K562 (cell line): ENCODE measurements at regions of chr6 and their contacts with region 1.

Region 1: DNA sequence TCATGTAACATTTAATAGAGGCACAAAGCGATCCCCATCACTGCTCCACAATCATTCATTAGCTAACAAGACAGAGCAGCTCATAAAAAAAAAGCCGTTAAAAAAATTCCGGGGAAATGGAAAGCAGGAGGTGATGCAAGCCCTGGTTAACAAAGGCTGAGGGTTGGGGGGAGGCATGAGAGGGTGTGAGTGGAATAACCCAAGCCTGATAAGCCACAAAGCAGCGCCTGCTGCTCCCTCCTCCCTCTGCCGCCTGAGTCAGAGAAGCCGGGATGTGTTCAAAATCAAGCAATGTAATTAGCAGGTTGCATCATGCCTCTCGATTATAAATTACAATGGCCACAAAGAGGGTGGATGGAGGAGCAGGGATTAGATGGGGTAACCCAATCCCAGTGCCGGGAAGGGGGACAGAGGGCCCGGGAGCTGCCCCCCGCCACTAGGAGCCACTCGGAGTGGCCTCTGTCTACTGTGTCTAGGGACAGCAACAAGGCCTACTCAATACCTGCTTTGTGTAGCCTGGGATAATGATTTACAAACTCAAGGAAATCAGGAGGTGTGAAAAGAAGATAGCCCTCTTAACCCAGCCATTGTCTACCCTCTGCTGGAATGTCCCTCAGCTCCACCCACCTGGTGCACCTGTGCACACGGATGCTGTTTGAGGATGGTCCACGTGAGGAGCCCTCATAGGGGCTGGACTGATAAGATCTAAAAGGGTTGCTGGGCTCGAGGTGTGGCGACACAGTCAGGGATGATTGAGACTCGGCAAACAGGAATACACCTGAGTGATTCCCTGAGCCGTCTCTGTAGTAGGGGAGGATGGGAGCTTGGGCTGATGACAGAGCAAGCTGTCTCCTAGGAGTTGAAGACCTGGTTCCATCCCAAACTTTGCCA is 156.9 kb downstream of the VEGFA start:
- DNase-seq: peak; percentile 84 to 95 (median 88)
- ATAC-seq: peak; percentile 92
- H3K4me3 ChIP-seq: no peak overlapping the region
- H3K27ac ChIP-seq: peak overlapping the region; percentile 93
- H3K4me1 ChIP-seq: peaks cover 31 to 33% of the 10 kb centered on the region in 2 experiments
- H3K27me3 ChIP-seq: no peaks in the 10 kb centered on the region
- CTCF ChIP-seq: 0 out of 6 replicates have a peak, but pooled peaks of 1 of the 3 experiments have one; percentile 12
- EP300 ChIP-seq: peak; percentile 100
- POLR2A ChIP-seq: no peak
- RAD21 ChIP-seq: peak; percentile 63

Region 2: GRCh38 chr6:43856005-43856765 is 70.7 kb before region 1 on chr6:
- CTCF ChIA-PET with region 1: no interaction called
- POLR2A ChIA-PET with region 1: no interaction called
- in situ Hi-C with region 1: no loop called
- intact Hi-C with region 1: loop called (anchors 5 kb)
- DNase-seq: peak; percentile 66 to 80 (median 72)
- ATAC-seq: peak; percentile 92
- H3K4me3 ChIP-seq: no peak overlapping the region
- H3K27ac ChIP-seq: no peak overlapping the region; the same call in 2 of the 3 replicates
- H3K4me1 ChIP-seq: peaks cover 6 to 8% of the 10 kb centered on the region in 2 experiments; a peak in 3 of 5 replicates
- H3K27me3 ChIP-seq: no peaks in the 10 kb centered on the region
- CTCF ChIP-seq: peak; percentile 83 to 89 (median 84)
- EP300 ChIP-seq: 0 out of 2 replicates have a peak, but pooled peaks have one; percentile 19
- POLR2A ChIP-seq: no peak
- RAD21 ChIP-seq: peak; percentile 89 to 92

Region 3: GRCh38 chr6:43887340-43887858 is 39.5 kb before region 1 on chr6:
- CTCF ChIA-PET with region 1: no interaction called
- POLR2A ChIA-PET with region 1: no interaction called
- in situ Hi-C with region 1: no loop called
- intact Hi-C with region 1: loop called (anchors 1 kb)
- DNase-seq: no peak
- ATAC-seq: peak; percentile 39
- H3K4me3 ChIP-seq: no peak overlapping the region
- H3K27ac ChIP-seq: no peak overlapping the region
- H3K4me1 ChIP-seq: peaks cover 20 to 28% of the 10 kb centered on the region in 2 experiments
- H3K27me3 ChIP-seq: no peaks in the 10 kb centered on the region
- CTCF ChIP-seq: no peak
- EP300 ChIP-seq: no peak
- POLR2A ChIP-seq: no peak
- RAD21 ChIP-seq: no peak

Region 4: DNA sequence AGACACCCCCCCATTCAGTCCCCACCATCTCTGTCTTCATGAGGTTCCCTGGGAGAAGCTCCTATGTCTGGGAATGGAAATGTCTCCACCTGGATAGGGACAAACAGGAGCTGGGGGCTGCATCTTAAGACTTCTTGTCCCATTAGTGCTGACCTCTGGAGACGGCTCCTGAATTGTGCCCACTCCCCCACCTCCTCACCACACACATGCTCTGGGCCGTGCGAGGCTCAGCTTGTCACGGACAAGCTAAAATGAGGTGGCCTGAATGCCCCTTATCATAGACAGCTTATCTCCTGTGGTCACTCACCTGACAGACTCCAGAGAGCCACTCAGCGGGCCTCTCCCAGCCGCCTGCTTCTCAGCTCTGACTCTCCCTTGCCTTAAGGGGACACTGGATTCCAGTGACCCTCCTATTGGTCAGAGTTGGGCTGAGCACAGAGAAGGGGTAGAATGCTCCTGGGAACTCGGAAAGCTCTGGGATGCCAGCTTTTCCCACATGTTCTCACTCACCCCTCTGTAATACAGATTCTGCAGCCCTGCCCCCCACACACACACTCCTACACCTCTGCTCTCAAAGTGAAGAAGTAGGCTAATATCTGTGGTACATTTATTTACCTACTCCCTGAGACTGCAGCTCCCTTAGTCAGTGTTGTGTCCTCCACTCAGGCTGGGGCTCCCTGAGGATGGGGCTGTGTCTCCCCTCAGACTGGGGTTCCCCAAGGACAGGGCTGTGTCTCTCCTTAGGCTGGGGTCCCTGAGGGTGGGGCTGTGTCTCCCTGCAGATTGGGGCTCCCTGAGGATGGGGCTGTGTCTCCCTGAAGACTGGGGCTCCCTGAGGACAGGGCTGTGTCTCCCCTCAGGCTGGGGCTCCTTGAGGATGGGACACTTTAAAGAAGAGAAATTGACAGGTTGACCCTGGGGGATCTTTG is 10.6 kb after region 1 on chr6:
- CTCF ChIA-PET with region 1: no interaction called
- POLR2A ChIA-PET with region 1: interaction called, 47 read pairs
- in situ Hi-C with region 1: no loop called
- intact Hi-C with region 1: no loop called
- DNase-seq: peak; percentile 73 to 84 (median 81)
- ATAC-seq: peak; percentile 79
- H3K4me3 ChIP-seq: no peak overlapping the region
- H3K27ac ChIP-seq: peak overlapping the region; percentile 32
- H3K4me1 ChIP-seq: peaks cover 46 to 52% of the 10 kb centered on the region in 2 experiments
- H3K27me3 ChIP-seq: no peaks in the 10 kb centered on the region
- CTCF ChIP-seq: no peak
- EP300 ChIP-seq: peak; percentile 80
- POLR2A ChIP-seq: no peak
- RAD21 ChIP-seq: peak; percentile 10 to 25; a peak in 2 of 4 replicates

Region 5: GRCh38 chr6:43945768-43946080 is 18.8 kb after region 1 on chr6:
- CTCF ChIA-PET with region 1: no interaction called
- POLR2A ChIA-PET with region 1: interaction called, 4 read pairs
- in situ Hi-C with region 1: no loop called
- intact Hi-C with region 1: loop called (anchors 1 kb)
- DNase-seq: no peak
- ATAC-seq: no peak
- H3K4me3 ChIP-seq: no peak overlapping the region
- H3K27ac ChIP-seq: peak overlapping the region; percentile 72
- H3K4me1 ChIP-seq: peaks cover 13 to 47% of the 10 kb centered on the region in 2 experiments; a peak in 4 of 5 replicates
- H3K27me3 ChIP-seq: no peaks in the 10 kb centered on the region
- CTCF ChIP-seq: no peak
- EP300 ChIP-seq: no peak
- POLR2A ChIP-seq: no peak
- RAD21 ChIP-seq: no peak

Region 6: DNA sequence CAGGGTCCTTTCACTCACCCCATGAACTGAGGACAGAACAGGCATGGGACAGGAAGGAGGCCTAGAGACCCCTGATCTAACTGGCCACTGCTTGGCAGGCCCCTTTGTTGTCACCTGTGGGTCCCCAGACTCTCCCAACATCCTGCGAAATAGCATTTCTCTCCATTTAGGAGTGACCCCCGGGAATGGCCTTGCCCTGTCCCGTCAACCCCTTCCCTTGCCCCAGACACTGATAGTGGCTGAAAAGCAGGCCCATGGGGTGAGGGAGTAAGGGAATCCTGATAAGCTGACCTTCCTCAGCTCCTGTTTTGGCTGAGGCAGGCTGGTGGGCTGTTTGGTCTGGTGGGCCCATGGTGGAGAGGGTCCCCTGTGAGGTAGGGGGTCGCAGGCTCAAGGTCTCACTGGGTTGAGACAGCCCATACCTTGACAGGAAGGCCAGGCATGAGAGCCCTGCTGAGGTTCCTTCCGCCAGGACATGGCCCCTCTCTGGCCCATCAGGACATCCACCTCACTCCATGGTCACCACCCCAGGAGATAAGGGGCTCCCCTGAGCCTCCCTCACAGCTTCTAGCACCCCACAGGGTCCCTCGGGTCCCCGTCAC is 61.1 kb after region 1 on chr6:
- CTCF ChIA-PET with region 1: no interaction called
- POLR2A ChIA-PET with region 1: no interaction called
- in situ Hi-C with region 1: no loop called
- intact Hi-C with region 1: no loop called
- DNase-seq: no peak
- ATAC-seq: no peak
- H3K4me3 ChIP-seq: no peak overlapping the region
- H3K27ac ChIP-seq: no peak overlapping the region
- H3K4me1 ChIP-seq: peaks cover 48 to 52% of the 10 kb centered on the region in 2 experiments
- H3K27me3 ChIP-seq: no peaks in the 10 kb centered on the region
- CTCF ChIP-seq: no peak
- EP300 ChIP-seq: no peak
- POLR2A ChIP-seq: no peak
- RAD21 ChIP-seq: no peak